Common myeloid progenitor, CD34-positive (primary cell): ENCODE measurements at regions of chr7 and their contacts with region 1.

Region 1: DNA sequence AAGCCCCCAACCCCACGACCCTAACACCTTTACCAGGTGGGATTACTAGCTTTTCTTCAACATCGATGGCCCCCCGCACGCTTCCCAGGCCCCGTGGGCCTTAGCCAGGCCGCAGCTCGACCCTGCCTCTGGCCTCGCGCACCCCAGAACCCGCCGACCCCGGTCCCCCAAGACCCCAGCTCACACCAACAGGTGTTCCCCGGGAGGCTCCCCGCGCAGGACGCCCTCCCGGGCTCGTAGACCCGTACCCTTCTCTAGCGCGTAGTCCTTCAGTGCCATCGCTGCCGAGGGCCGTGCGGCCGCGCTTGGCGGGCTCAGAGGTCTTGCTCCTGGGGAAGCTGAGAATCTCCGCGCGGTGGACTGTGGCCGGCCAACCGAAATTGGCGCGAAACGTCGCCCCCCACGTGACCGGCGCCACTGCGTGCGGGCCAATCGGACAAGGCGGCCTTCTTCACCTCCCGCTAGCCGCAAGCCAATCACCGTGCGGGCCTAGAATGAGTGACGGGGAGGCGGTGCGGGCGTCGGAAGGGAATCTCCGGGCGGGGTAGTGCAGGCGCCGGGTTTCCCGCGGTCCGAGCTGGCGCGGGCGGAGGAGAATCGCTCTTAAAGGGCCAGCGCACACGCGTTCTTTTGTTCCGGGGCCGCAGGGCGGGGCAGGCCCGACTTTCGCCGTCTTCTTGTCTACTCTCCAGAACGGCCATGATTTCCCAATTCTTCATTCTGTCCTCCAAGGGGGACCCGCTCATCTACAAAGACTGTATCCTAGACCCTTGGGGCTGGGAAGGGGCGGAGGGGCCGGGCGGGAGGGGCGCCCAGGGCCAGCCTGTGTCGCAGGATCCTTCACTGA is at the starts of genes AP4M1 and MCM7:
- DNase-seq: peak; percentile 97 to 98 (median 98)
- H3K4me3 ChIP-seq: peak within 1 kb of the TSS; percentile 56 to 93 (median 88)
- H3K27ac ChIP-seq: peak within 1 kb of the TSS; percentile 86 to 90
- H3K4me1 ChIP-seq: peaks cover 7 to 25% (median 15%) of the 10 kb centered on the region in 4 experiments
- H3K27me3 ChIP-seq: no peaks in the 10 kb centered on the region

Region 2: GRCh38 chr7:100081535-100082102 is 19.6 kb before region 1 on chr7 and contains the start of gene ZNF3:
- CTCF ChIA-PET with region 1: interaction called, 7 read pairs
- POLR2A ChIA-PET with region 1: interaction called, 13 read pairs
- DNase-seq: peak; percentile 99 to 100 (median 100)
- H3K4me3 ChIP-seq: peak within 1 kb of the TSS; percentile 86 to 99 (median 94)
- H3K27ac ChIP-seq: peak within 1 kb of the TSS; percentile 87 to 90
- H3K4me1 ChIP-seq: peaks cover 11 to 30% (median 26%) of the 10 kb centered on the region in 4 experiments
- H3K27me3 ChIP-seq: no peaks in the 10 kb centered on the region

Region 3: DNA sequence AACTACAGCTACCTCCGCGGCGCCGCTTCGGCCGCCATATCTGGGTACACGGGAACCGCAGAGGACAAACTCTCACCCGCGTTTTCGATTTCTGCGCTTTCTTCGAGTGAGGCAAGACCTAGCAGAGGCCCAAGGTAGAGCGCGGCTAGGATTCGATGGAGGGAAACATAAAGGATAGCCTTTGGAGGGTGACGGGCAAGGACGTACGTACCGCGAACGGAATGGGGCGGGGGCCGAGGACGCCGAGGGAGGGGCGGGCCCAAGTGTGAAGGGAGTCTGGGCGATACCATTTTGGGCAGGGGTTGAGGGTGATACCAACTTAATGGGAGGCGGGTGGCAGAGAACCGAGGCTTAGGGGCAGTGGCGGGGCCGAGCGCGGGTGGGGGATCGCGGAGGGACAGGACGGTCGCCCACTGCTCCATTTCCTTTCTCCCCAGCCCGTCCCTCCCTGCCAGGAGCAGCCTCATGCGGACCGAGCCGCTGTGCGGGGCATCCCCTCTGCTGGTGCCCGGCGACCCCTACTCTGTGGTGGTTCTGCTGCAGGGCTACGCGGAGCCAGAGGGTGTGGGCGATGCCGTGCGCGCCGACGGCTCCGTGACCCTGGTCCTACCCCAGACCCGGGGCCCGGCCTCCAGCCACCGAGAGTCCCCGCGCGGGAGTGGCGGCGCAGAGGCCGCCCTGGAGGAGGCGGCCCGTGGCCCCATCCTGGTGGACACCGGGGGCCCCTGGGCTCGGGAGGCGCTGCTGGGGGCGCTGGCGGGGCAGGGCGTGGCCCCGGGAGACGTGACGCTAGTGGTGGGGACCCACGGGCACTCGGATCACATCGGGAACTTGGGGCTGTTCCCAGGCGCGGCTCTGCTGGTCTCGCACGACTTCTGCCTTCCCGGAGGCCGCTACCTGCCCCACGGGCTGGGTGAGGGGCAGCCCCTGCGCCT is 26.0 kb after region 1 on chr7 and contains the start of gene MBLAC1:
- CTCF ChIA-PET with region 1: interaction called, 7 read pairs
- POLR2A ChIA-PET with region 1: interaction called, 10 read pairs
- DNase-seq: peak; percentile 94 to 97 (median 97)
- H3K4me3 ChIP-seq: peak within 1 kb of the TSS; percentile 62 to 97 (median 84)
- H3K27ac ChIP-seq: peak within 1 kb of the TSS; percentile 93 to 98
- H3K4me1 ChIP-seq: peaks cover 0 to 35% (median 26%) of the 10 kb centered on the region in 4 experiments
- H3K27me3 ChIP-seq: no peaks in the 10 kb centered on the region